CD4-positive, alpha-beta memory T cell (primary cell): ENCODE measurements at regions of chrX and their contacts with region 1.

Region 1: DNA sequence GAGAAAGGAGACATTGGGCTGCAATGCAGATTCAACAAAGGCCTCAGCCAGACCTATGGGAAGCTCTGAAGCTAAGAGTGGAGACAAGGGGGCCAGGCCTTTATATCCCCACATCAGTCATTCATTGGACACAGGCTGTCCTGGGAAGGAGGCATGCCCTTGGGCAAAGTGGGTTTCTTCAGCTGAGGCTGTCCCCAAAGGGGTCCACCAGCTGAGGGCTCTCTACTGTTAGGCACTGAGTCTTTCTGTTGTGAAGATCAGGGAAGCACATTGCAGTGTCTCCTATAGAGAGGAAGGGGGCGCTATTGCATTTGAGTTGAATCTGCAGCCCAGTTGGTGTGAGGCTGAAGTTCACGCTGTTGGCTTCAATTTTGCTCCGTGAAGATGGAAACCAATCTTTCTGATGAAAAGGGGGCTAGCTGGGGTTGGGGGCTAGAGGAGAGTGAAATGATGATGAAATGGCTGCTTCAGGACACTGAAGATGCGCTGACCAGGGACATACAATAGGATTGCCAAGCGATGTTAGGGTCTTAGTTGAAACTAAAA is 48.0 kb downstream of the SLC25A5 start:
- DNase-seq: peak; percentile 35 to 64 (median 63)
- H3K4me3 ChIP-seq: no peak overlapping the region
- H3K4me3 Mint-ChIP-seq: no peak overlapping the region
- H3K27ac ChIP-seq: no peak overlapping the region
- H3K27ac Mint-ChIP-seq: peak overlapping the region in 5 of 7 donors; percentile 5 to 58 (median 28)
- H3K4me1 ChIP-seq: no peaks in the 10 kb centered on the region
- H3K4me1 Mint-ChIP-seq: peaks cover 2 to 5% (median 4%) of the 10 kb centered on the region in 4 donors
- H3K27me3 ChIP-seq: no peaks in the 10 kb centered on the region
- H3K27me3 Mint-ChIP-seq: no peaks in the 10 kb centered on the region

Region 2: GRCh38 chrX:119410027-119410823 is 106.0 kb before region 1 on chrX:
- CTCF ChIA-PET with region 1: no interaction called
- POLR2A ChIA-PET with region 1: no interaction called
- intact Hi-C with region 1: no loop called
- DNase-seq: no peak
- H3K4me3 ChIP-seq: no peak overlapping the region
- H3K4me3 Mint-ChIP-seq: no peak overlapping the region
- H3K27ac ChIP-seq: no peak overlapping the region
- H3K27ac Mint-ChIP-seq: peak overlapping the region in 1 of 7 donors; percentile 69
- H3K4me1 ChIP-seq: no peaks in the 10 kb centered on the region
- H3K4me1 Mint-ChIP-seq: no peaks in the 10 kb centered on the region
- H3K27me3 ChIP-seq: no peaks in the 10 kb centered on the region
- H3K27me3 Mint-ChIP-seq: no peaks in the 10 kb centered on the region

Region 3: GRCh38 chrX:119488749-119489148 is 27.5 kb before region 1 on chrX:
- CTCF ChIA-PET with region 1: interaction called, 11 read pairs
- POLR2A ChIA-PET with region 1: no interaction called
- intact Hi-C with region 1: no loop called
- DNase-seq: peak in 4 of 5 donors; percentile 33 to 46 (median 38)
- H3K4me3 ChIP-seq: no peak overlapping the region
- H3K4me3 Mint-ChIP-seq: no peak overlapping the region
- H3K27ac ChIP-seq: no peak overlapping the region
- H3K27ac Mint-ChIP-seq: peak overlapping the region in 2 of 7 donors; percentile 22 to 43
- H3K4me1 ChIP-seq: no peaks in the 10 kb centered on the region
- H3K4me1 Mint-ChIP-seq: no peaks in the 10 kb centered on the region
- H3K27me3 ChIP-seq: no peaks in the 10 kb centered on the region
- H3K27me3 Mint-ChIP-seq: no peaks in the 10 kb centered on the region

Region 4: GRCh38 chrX:119606280-119607015 is 90.2 kb after region 1 on chrX and contains the start of gene NKRF:
- CTCF ChIA-PET with region 1: interaction called, 7 read pairs
- POLR2A ChIA-PET with region 1: no interaction called
- intact Hi-C with region 1: loop called (anchors 5 kb)
- DNase-seq: peak; percentile 87 to 94 (median 89)
- H3K4me3 ChIP-seq: peak within 1 kb of the TSS; percentile 73 to 84
- H3K4me3 Mint-ChIP-seq: peak within 1 kb of the TSS; percentile 91 to 97 (median 95)
- H3K27ac ChIP-seq: peak within 1 kb of the TSS; percentile 85
- H3K27ac Mint-ChIP-seq: peak within 1 kb of the TSS; percentile 93 to 99 (median 99)
- H3K4me1 ChIP-seq: peaks cover 26% of the 10 kb centered on the region
- H3K4me1 Mint-ChIP-seq: peaks cover 10 to 46% (median 28%) of the 10 kb centered on the region in 4 donors
- H3K27me3 ChIP-seq: no peaks in the 10 kb centered on the region
- H3K27me3 Mint-ChIP-seq: no peaks in the 10 kb centered on the region
- total RNA-seq, gene NKRF: 13.0 to 14.2 TPM

Region 5: DNA sequence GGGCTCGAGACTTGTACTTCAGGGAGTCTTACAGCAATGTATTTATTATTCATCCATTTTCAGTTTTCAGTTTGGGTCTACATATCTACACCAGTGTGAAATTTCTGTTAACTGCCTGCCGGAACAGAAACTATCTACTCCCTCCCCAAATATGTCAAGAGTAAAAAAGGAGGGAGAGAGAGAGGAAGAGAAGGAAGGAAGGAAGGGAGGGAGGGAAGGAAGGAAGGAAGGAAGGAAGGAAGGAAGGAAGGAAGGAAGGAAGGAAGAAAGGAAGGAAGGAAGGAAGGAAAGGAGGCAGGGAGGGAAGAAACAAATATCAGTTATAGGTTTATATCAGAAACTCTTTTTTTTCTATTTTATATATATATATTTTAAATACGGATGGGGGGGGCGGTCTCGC is 262.6 kb after region 1 on chrX:
- CTCF ChIA-PET with region 1: no interaction called
- POLR2A ChIA-PET with region 1: no interaction called
- intact Hi-C with region 1: loop called (anchors 1 kb)
- DNase-seq: no peak
- H3K4me3 ChIP-seq: no peak overlapping the region
- H3K4me3 Mint-ChIP-seq: no peak overlapping the region
- H3K27ac ChIP-seq: no peak overlapping the region
- H3K27ac Mint-ChIP-seq: peak overlapping the region in 3 of 7 donors; percentile 19 to 81 (median 79)
- H3K4me1 ChIP-seq: no peaks in the 10 kb centered on the region
- H3K4me1 Mint-ChIP-seq: peaks cover 0 to 13% (median 0%) of the 10 kb centered on the region in 4 donors
- H3K27me3 ChIP-seq: no peaks in the 10 kb centered on the region
- H3K27me3 Mint-ChIP-seq: no peaks in the 10 kb centered on the region

Region 6: GRCh38 chrX:119887721-119888425 is 371.6 kb after region 1 on chrX:
- CTCF ChIA-PET with region 1: interaction called, 10 read pairs
- POLR2A ChIA-PET with region 1: no interaction called
- intact Hi-C with region 1: loop called (anchors 1 kb)
- DNase-seq: peak; percentile 40 to 54 (median 50)
- H3K4me3 ChIP-seq: peak overlapping the region in 1 of 2 donors; percentile 27
- H3K4me3 Mint-ChIP-seq: peak overlapping the region in 7 of 8 donors; percentile 17 to 71 (median 64)
- H3K27ac ChIP-seq: no peak overlapping the region
- H3K27ac Mint-ChIP-seq: no peak overlapping the region
- H3K4me1 ChIP-seq: peaks cover 9% of the 10 kb centered on the region
- H3K4me1 Mint-ChIP-seq: peaks cover 3 to 18% (median 7%) of the 10 kb centered on the region in 4 donors
- H3K27me3 ChIP-seq: no peaks in the 10 kb centered on the region
- H3K27me3 Mint-ChIP-seq: peaks cover 0 to 1% of the 10 kb centered on the region in 2 donors